Motor neuron (in vitro differentiated cells): ENCODE measurements at regions of chr12 and their contacts with region 1.

Region 1: DNA sequence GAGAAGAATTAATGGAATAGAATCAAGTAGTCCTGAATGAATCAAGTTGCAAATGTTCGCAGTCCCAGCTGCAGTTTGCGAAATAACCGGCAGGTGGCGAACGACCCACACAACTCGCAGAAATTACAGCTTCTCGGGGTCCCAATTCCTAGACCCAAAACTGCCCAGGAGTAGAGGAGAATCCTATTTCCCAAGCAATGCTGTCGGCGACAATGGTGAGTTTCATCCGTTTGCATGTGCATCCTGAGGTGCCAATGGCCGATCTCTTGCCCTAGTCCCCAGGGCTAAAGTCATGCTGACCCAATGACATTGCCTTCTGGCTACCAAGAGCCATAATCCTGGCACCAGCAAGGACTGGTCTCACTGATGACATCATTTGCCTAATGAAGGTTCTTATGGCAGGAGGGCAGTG is 8.5 kb upstream of the ASCL1 start:
- ATAC-seq: peak in 3 of 8 experiments; percentile 6 to 26 (median 15)
- H3K4me3 ChIP-seq: no peak overlapping the region
- H3K27ac ChIP-seq: no peak overlapping the region
- H3K4me1 ChIP-seq: peaks cover 15 to 25% of the 10 kb centered on the region in 2 donors

Region 2: GRCh38 chr12:103548622-103549601 is 600.0 kb after region 1 on chr12:
- in situ Hi-C with region 1: loop called (anchors 10 to 25 kb)
- ATAC-seq: peak; percentile 64 to 89 (median 76)
- H3K4me3 ChIP-seq: no peak overlapping the region
- H3K27ac ChIP-seq: no peak overlapping the region
- H3K4me1 ChIP-seq: no peaks in the 10 kb centered on the region

Region 3: DNA sequence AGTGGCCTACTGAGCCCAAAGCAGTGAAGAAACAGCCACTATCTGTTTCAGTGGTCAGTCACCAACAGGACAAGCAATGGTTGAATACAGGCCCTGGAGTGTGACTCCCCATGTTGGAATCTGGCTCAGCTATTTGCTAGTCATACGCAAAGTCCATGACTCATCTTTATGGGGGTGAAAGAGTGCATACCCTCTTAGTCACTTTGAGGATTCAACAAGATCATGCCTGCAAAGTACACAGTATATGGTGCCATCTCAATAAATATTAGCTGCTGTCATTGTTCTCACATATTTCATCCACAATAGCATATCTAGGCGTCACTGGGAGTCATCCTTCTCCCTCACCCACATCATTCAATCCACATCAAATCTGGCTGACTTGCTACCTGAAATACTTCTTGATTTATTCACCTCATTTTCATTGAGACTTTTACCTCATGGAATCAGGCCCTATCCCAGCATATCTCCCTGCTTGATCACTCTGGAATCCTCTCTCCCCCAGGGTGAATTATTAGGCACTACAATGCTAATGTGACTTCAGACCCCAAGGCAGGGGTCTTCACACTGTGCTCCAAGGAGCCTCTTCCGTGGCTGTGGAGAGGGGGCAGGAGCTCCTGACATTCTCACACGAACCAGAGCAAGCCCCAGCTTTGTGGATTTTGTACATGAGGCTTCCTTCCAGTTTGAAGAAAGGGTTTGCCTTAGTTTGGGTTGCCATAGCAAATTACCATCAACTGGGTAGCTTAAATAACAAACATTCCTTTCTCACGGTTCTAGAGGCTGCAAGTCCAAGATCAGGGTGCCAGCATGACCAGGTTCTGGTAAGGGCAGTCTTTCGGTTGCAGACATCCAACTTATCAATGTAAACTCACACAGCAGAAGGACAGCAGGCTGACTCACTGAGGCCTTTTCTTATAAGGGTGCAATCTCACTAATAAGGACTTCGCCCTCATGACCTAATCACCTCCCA is 611.9 kb after region 1 on chr12:
- in situ Hi-C with region 1: loop called in 4 of 9 experiments (anchors 10 to 25 kb)
- ATAC-seq: peak in 7 of 8 experiments; percentile 46 to 99 (median 88)
- H3K4me3 ChIP-seq: no peak overlapping the region
- H3K27ac ChIP-seq: no peak overlapping the region
- H3K4me1 ChIP-seq: no peaks in the 10 kb centered on the region